B cell (primary cell): ENCODE measurements at regions of chr22 and their contacts with region 1.

Region 1: GRCh38 chr22:38201710-38202436 is at the start of gene MAFF:
- DNase-seq: peak; percentile 87
- ATAC-seq: peak; percentile 77
- H3K4me3 ChIP-seq: peak within 1 kb of the TSS; percentile 49 to 78 (median 67)
- H3K4me3 Mint-ChIP-seq: peak within 1 kb of the TSS; percentile 90
- H3K27ac ChIP-seq: peak within 1 kb of the TSS; percentile 38 to 66
- H3K27ac Mint-ChIP-seq: peak within 1 kb of the TSS; percentile 83
- H3K4me1 ChIP-seq: peaks cover 25 to 33% of the 10 kb centered on the region in 2 donors
- H3K4me1 Mint-ChIP-seq: peaks cover 44% of the 10 kb centered on the region
- H3K27me3 ChIP-seq: no peaks in the 10 kb centered on the region
- H3K27me3 Mint-ChIP-seq: no peaks in the 10 kb centered on the region
- CTCF ChIP-seq: no peak
- total RNA-seq, gene MAFF: 4.8 and 5.3 TPM in 2 replicates

Region 2: DNA sequence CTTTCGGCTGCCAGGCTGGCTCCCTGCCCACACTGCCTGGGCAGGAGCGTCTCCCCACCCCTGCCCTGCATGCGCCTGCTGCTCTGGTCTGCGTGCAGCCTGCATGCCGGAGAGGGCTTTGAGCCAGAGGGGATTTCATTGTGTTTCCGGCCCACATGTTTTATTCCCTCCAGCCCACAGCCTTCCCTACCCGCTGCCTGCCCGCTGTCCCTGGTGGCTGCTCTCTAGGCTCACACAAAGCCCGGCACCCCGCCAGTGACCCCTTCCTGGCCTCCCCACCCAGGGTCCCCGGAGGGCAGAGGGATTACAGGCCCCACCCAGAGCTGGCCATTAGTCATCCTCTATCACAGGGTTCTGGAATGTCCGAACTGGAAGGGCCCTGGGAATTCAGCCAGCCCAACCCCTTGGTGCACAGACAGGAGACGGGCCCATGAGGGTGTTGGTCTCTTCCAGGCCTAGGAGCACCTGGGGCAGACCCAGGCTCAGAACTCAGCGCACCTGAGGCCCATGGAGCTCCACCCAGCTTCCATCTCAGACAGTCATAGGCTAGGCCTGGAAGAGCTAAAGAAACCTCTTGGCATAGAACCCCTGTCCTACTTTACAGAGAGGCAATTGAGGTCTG is 449.3 kb before region 1 on chr22:
- CTCF ChIA-PET with region 1: no interaction called
- POLR2A ChIA-PET with region 1: no interaction called
- intact Hi-C with region 1: no loop called
- DNase-seq: no peak
- ATAC-seq: no peak
- H3K4me3 ChIP-seq: no peak overlapping the region
- H3K4me3 Mint-ChIP-seq: no peak overlapping the region
- H3K27ac ChIP-seq: no peak overlapping the region
- H3K27ac Mint-ChIP-seq: no peak overlapping the region
- H3K4me1 ChIP-seq: peaks cover 2 to 5% of the 10 kb centered on the region in 2 donors
- H3K4me1 Mint-ChIP-seq: peaks cover 12% of the 10 kb centered on the region
- H3K27me3 ChIP-seq: no peaks in the 10 kb centered on the region
- H3K27me3 Mint-ChIP-seq: no peaks in the 10 kb centered on the region
- CTCF ChIP-seq: no peak

Region 3: DNA sequence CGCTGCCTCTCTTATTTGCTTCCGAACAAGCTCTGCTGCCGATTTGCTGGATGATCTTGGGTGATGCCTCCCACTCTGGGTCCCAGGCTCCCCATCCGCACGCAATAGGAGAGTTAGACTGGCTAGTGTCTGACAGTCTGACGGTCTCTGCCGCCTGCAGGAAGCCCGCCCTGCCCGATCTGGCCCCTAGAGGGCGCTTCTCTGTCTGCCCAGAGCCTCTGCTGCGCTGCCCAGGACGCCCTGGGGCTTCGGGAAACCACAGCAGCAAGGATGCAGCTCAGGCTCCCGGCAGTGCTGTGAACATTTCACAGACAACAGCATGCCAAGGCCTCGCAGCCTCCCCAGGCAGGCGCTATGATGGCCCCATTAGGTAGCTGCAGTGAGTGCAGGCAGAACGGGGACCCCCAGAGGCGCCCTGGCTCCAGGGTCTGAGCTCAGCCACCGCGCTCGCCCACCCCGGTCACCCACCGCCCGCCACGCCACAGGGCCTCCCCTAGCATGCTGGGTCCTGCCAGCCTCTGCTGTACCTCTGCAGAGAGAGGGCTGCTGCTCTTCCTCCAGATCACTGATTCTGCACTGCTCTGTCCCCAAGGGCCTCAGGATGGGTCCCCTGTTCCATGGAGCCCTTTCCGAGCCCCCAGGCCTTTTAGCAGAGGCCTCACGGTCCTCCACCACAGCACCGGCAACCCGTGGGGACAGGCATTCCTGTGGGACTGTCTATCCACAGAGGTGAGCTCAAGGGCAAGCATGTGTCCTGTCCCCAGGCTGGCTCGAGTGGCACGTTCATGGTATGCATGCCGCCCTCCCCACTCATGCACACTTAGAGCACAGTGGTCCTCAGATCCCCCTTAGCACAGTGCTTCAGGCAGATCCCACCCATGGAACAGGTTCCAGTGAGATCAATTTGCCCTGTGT is 87.1 kb before region 1 on chr22:
- CTCF ChIA-PET with region 1: interaction called, 4 read pairs
- POLR2A ChIA-PET with region 1: no interaction called
- intact Hi-C with region 1: loop called (anchors 5 kb)
- DNase-seq: peak; percentile 76
- ATAC-seq: peak; percentile 86
- H3K4me3 ChIP-seq: no peak overlapping the region
- H3K4me3 Mint-ChIP-seq: no peak overlapping the region
- H3K27ac ChIP-seq: no peak overlapping the region
- H3K27ac Mint-ChIP-seq: no peak overlapping the region
- H3K4me1 ChIP-seq: peaks cover 0 to 3% of the 10 kb centered on the region in 2 donors
- H3K4me1 Mint-ChIP-seq: peaks cover 2% of the 10 kb centered on the region
- H3K27me3 ChIP-seq: no peaks in the 10 kb centered on the region
- H3K27me3 Mint-ChIP-seq: no peaks in the 10 kb centered on the region
- CTCF ChIP-seq: peak; percentile 86

Region 4: GRCh38 chr22:38163844-38164550 is 37.9 kb before region 1 on chr22:
- CTCF ChIA-PET with region 1: no interaction called
- POLR2A ChIA-PET with region 1: interaction called, 6 read pairs
- intact Hi-C with region 1: loop called (anchors 5 kb)
- DNase-seq: no peak
- ATAC-seq: no peak
- H3K4me3 ChIP-seq: no peak overlapping the region
- H3K4me3 Mint-ChIP-seq: no peak overlapping the region
- H3K27ac ChIP-seq: no peak overlapping the region
- H3K27ac Mint-ChIP-seq: peak overlapping the region; percentile 68
- H3K4me1 ChIP-seq: peaks cover 22 to 23% of the 10 kb centered on the region in 2 donors
- H3K4me1 Mint-ChIP-seq: peaks cover 32% of the 10 kb centered on the region
- H3K27me3 ChIP-seq: no peaks in the 10 kb centered on the region
- H3K27me3 Mint-ChIP-seq: no peaks in the 10 kb centered on the region
- CTCF ChIP-seq: no peak

Region 5: DNA sequence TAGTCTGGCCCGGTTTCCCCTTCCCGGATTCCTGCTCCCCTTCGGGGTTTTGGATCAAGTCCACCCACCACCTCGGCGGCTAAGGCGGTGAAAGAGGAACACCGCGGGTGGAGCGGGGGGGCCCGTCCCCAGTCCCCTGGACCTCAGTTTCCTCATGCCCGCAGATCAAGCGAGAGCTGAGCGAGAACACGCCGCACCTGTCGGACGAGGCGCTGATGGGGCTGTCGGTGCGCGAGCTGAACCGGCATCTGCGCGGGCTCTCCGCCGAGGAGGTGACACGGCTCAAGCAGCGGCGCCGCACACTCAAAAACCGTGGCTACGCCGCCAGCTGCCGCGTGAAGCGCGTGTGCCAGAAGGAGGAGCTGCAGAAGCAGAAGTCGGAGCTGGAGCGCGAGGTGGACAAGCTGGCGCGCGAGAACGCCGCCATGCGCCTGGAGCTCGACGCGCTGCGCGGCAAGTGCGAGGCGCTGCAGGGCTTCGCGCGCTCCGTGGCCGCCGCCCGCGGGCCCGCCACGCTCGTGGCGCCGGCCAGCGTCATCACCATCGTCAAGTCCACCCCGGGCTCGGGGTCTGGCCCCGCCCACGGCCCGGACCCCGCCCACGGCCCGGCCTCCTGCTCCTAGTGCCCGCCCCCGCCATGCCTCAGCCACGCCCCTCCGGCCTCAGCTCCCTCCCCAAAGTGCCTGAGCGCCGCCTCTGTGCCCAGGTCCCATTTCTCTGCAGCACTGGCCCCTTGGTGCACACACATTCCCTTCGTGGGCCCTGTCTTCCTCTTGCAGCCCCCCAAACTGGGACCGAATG is 12.6 kb after region 1 on chr22:
- CTCF ChIA-PET with region 1: interaction called, 6 read pairs
- POLR2A ChIA-PET with region 1: no interaction called
- intact Hi-C with region 1: loop called (anchors 1 kb)
- DNase-seq: peak; percentile 82
- ATAC-seq: peak; percentile 84
- H3K4me3 ChIP-seq: peak overlapping the region in 4 of 5 experiments; percentile 20 to 51 (median 34)
- H3K4me3 Mint-ChIP-seq: peak overlapping the region; percentile 78
- H3K27ac ChIP-seq: no peak overlapping the region
- H3K27ac Mint-ChIP-seq: peak overlapping the region; percentile 15
- H3K4me1 ChIP-seq: peaks cover 5 to 18% of the 10 kb centered on the region in 2 donors
- H3K4me1 Mint-ChIP-seq: peaks cover 19% of the 10 kb centered on the region
- H3K27me3 ChIP-seq: no peaks in the 10 kb centered on the region
- H3K27me3 Mint-ChIP-seq: no peaks in the 10 kb centered on the region
- CTCF ChIP-seq: peak; percentile 37

Region 6: GRCh38 chr22:38272373-38273134 is 70.7 kb after region 1 on chr22 and contains the start of gene TMEM184B:
- CTCF ChIA-PET with region 1: no interaction called
- POLR2A ChIA-PET with region 1: no interaction called
- intact Hi-C with region 1: loop called (anchors 2 kb)
- DNase-seq: peak; percentile 90
- ATAC-seq: peak; percentile 96
- H3K4me3 ChIP-seq: peak within 1 kb of the TSS; percentile 48 to 98 (median 76)
- H3K4me3 Mint-ChIP-seq: peak within 1 kb of the TSS; percentile 94
- H3K27ac ChIP-seq: peak within 1 kb of the TSS; percentile 66 to 85
- H3K27ac Mint-ChIP-seq: peak within 1 kb of the TSS; percentile 92
- H3K4me1 ChIP-seq: peaks cover 15 to 21% of the 10 kb centered on the region in 2 donors
- H3K4me1 Mint-ChIP-seq: peaks cover 38% of the 10 kb centered on the region
- H3K27me3 ChIP-seq: peaks cover 0 to 3% (median 0%) of the 10 kb centered on the region in 4 experiments
- H3K27me3 Mint-ChIP-seq: no peaks in the 10 kb centered on the region
- CTCF ChIP-seq: no peak
- total RNA-seq, gene TMEM184B: 23.5 and 24.7 TPM in 2 replicates

Region 7: DNA sequence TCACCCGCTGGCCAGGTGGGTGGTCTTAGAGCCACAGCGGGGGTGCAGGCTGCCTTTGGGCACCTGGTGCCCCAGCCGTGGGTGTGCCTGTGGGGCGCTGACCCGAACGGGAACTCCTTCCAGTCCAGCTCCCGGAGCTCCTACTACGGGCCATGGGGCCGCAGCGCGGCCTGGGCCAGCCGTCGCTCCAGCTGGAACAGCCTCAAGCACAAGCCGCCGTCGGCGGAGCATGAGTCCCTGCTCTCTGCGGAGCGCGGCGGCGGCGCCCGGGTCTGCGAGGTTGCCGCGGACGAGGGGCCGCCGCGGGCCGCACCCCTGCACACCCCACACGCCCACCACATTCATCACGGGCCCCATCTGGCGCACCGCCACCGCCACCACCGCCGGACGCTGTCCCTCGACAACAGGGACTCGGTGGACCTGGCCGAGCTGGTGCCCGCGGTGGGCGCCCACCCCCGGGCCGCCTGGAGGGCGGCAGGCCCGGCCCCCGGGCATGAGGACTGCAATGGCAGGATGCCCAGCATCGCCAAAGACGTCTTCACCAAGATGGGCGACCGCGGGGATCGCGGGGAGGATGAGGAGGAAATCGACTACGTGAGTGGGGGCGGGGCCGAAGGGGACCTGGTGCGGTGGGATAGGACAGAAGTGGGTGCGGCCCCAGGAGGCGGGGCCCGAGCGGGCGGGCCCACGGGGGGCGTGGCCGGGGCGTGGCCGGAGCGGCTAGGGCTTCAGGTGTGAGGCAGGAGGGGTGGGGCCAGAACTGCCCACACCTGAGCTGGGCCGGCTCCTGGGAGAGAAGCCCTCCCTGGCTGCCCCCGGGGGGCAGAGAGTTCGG is 1460.2 kb after region 1 on chr22:
- CTCF ChIA-PET with region 1: no interaction called
- POLR2A ChIA-PET with region 1: no interaction called
- intact Hi-C with region 1: no loop called
- DNase-seq: peak; percentile 68
- ATAC-seq: peak; percentile 52
- H3K4me3 ChIP-seq: peak overlapping the region in 3 of 5 experiments; percentile 41 to 50 (median 46)
- H3K4me3 Mint-ChIP-seq: peak overlapping the region; percentile 80
- H3K27ac ChIP-seq: no peak overlapping the region
- H3K27ac Mint-ChIP-seq: peak overlapping the region; percentile 53
- H3K4me1 ChIP-seq: peaks cover 25 to 29% of the 10 kb centered on the region in 2 donors
- H3K4me1 Mint-ChIP-seq: peaks cover 24% of the 10 kb centered on the region
- H3K27me3 ChIP-seq: peaks cover 0 to 69% (median 23%) of the 10 kb centered on the region in 4 experiments
- H3K27me3 Mint-ChIP-seq: peaks cover 66% of the 10 kb centered on the region
- CTCF ChIP-seq: no peak